Thyroid gland (tissue), 4 donors: ENCODE measurements at regions of chr1 and their contacts with region 1.

Region 1: GRCh38 chr1:204763706-204764427 is 78.3 kb upstream of the LRRN2 start:
- DNase-seq: peak; percentile 90 to 92
- H3K4me3 ChIP-seq: no peak overlapping the region
- H3K27ac ChIP-seq: peak overlapping the region in 1 of 3 donors; percentile 33
- H3K4me1 ChIP-seq: peaks cover 8 to 10% of the 10 kb centered on the region in 2 donors
- H3K27me3 ChIP-seq: no peaks in the 10 kb centered on the region
- CTCF ChIP-seq: peak; percentile 54 to 91 (median 72)
- POLR2A ChIP-seq: no peak

Region 2: GRCh38 chr1:204578867-204579664 is 184.8 kb before region 1 on chr1:
- intact Hi-C with region 1: loop called (anchors 10 kb)
- DNase-seq: peak in 1 of 2 donors; percentile 34
- H3K4me3 ChIP-seq: peak overlapping the region in 1 of 3 donors; percentile 4
- H3K27ac ChIP-seq: no peak overlapping the region
- H3K4me1 ChIP-seq: peaks cover 6 to 22% of the 10 kb centered on the region in 2 donors
- H3K27me3 ChIP-seq: no peaks in the 10 kb centered on the region
- CTCF ChIP-seq: no peak
- POLR2A ChIP-seq: no peak

Region 3: GRCh38 chr1:204837440-204838084 is 73.7 kb after region 1 on chr1:
- intact Hi-C with region 1: no loop called
- DNase-seq: peak; percentile 13 to 55
- H3K4me3 ChIP-seq: no peak overlapping the region
- H3K27ac ChIP-seq: no peak overlapping the region
- H3K4me1 ChIP-seq: no peaks in the 10 kb centered on the region
- H3K27me3 ChIP-seq: no peaks in the 10 kb centered on the region
- CTCF ChIP-seq: no peak
- POLR2A ChIP-seq: no peak